ENCODE measurements at regions of chr10 and their contacts with region 1.

Region 1: DNA sequence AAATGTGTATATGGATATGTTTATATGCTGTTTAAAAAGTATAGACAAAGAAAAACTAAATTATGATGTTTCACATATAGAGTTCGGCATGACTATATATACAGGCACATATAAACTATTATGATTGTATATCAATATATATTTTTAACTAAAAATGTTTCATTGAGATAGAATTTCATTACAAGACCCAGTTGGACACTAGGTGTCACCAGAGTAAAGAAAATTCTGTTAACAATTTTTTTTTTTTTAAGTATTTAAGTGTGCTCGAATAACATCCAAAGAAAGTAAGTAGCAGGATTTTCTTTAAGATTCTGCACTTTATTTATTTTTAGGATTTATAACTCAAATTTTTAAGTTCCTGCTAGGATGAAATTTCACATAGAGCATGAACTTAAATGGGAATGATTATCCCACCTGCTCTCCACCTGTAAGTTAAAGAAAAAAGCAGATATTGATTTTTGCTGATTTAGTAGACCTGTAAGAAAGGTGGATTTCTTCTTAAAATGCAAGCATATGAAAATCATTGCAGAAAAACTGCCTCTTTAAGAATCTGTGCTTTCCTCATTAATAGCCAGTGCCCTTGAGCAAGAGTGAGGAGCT is 961.5 kb downstream of the PCDH15 start:
- DNase-seq: no peak
- H3K4me3 ChIP-seq: no peak overlapping the region
- H3K27ac ChIP-seq: no peak overlapping the region
- H3K4me1 ChIP-seq: no peaks in the 10 kb centered on the region
- H3K27me3 ChIP-seq: no peaks in the 10 kb centered on the region
- CTCF ChIP-seq: peak; percentile 69

Region 2: GRCh38 chr10:53209944-53210611 is 629.5 kb before region 1 on chr10:
- CTCF ChIA-PET with region 1: no interaction called
- POLR2A ChIA-PET with region 1: no interaction called
- intact Hi-C with region 1: loop called (anchors 10 kb)
- DNase-seq: peak in 1 of 2 experiments; percentile 33
- H3K4me3 ChIP-seq: no peak overlapping the region
- H3K27ac ChIP-seq: no peak overlapping the region
- H3K4me1 ChIP-seq: no peaks in the 10 kb centered on the region
- H3K27me3 ChIP-seq: no peaks in the 10 kb centered on the region
- CTCF ChIP-seq: peak; percentile 76

Region 3: DNA sequence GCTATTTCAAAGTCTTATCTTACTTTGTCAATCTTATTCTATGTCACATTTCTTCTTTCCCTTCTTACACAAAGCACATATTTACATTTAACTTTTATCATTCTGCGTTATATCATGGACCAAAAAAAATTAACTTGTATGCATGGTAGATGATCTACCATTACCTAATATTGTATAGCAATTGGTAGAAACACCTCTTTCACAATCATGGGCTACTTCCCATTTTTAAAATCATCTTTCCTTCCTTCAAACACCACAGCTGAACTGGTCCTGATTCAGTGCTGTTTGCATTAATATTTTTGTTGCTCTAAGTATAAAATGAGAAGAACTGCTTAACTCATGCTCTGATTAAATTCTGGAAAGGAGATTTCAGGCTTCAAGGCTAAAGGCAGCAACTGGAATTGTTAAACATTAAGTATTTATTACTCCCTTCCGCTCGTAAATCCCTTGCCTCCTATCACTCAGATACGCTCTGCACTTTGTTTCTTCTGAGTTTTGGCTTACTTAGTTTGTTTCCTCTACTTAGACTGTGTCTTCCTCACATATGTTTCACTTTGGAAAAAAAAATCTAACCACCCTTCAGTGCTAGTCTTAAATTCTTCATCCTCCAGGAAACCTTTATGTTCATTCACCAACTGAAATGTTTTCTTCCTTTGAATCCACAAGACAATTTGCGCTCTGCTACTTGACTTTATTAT is 60.1 kb after region 1 on chr10:
- CTCF ChIA-PET with region 1: no interaction called
- POLR2A ChIA-PET with region 1: no interaction called
- intact Hi-C with region 1: no loop called
- DNase-seq: no peak
- H3K4me3 ChIP-seq: no peak overlapping the region
- H3K27ac ChIP-seq: no peak overlapping the region
- H3K4me1 ChIP-seq: no peaks in the 10 kb centered on the region
- H3K27me3 ChIP-seq: no peaks in the 10 kb centered on the region
- CTCF ChIP-seq: no peak

Region 4: DNA sequence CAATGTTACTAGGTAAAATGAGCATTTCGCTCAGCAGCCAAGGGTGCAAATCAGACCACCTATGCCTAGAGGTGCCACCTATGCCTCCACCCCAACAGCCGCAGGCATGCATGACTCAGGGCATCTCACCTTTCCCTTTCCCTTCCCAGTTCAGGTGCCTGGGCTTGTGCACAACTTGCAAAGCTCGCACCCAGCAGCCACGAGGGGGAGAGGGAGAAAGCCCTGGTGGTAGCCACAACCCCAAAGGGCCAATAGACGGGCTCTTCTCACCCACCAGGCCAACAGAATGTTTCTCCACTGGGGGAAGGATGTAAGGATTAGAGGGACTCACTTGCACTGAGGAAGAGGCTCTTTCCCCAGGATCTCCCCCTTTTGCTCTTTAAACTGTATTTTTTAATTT is 1423.8 kb after region 1 on chr10:
- CTCF ChIA-PET with region 1: no interaction called
- POLR2A ChIA-PET with region 1: no interaction called
- intact Hi-C with region 1: loop called (anchors 5 kb)
- DNase-seq: no peak
- H3K4me3 ChIP-seq: no peak overlapping the region
- H3K27ac ChIP-seq: no peak overlapping the region
- H3K4me1 ChIP-seq: no peaks in the 10 kb centered on the region
- H3K27me3 ChIP-seq: no peaks in the 10 kb centered on the region
- CTCF ChIP-seq: no peak